ENCODE measurements at regions of chrX and their contacts with region 1.

Region 1: GRCh38 chrX:19372170-19372546 is 28.4 kb downstream of the PDHA1 start:
- DNase-seq: peak; percentile 79
- H3K4me3 ChIP-seq: peak overlapping the region; percentile 37 to 54
- H3K27ac ChIP-seq: no peak overlapping the region
- H3K4me1 ChIP-seq: peaks cover 0 to 4% of the 10 kb centered on the region in 2 experiments; a peak in 1 of 4 replicates
- H3K27me3 ChIP-seq: peaks cover 18% of the 10 kb centered on the region; the same call in 1 of the 2 replicates
- CTCF ChIP-seq: peak; percentile 91
- EP300 ChIP-seq: no peak
- RAD21 ChIP-seq: peak; percentile 82

Region 2: GRCh38 chrX:19360903-19361302 is 11.3 kb before region 1 on chrX:
- CTCF ChIA-PET with region 1: interaction called, 29 read pairs
- POLR2A ChIA-PET with region 1: no interaction called
- DNase-seq: no peak
- H3K4me3 ChIP-seq: no peak overlapping the region
- H3K27ac ChIP-seq: no peak overlapping the region
- H3K4me1 ChIP-seq: no peaks in the 10 kb centered on the region
- H3K27me3 ChIP-seq: no peaks in the 10 kb centered on the region; the same call in 1 of the 2 replicates
- CTCF ChIP-seq: no peak
- EP300 ChIP-seq: no peak
- RAD21 ChIP-seq: no peak

Region 3: DNA sequence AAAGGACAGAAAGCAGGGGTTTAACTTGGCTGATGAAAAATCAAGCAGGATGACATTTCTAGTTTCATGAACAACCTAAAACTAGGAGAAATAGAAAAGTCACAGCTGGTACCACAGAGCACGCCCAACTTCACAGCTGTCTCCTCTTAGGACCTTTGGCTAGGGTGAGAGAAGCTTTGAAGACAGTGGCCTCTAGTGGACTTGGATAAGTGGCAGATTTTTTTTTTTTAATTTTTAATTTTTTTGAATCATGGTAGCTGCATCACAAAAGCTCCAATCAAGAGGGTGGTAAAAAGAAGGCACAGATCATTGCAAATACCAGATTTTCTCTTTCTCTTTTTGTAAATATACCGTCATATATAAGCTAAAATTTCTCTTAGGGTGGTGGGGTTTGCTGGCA is 163.3 kb after region 1 on chrX:
- CTCF ChIA-PET with region 1: interaction called, 18 read pairs
- POLR2A ChIA-PET with region 1: no interaction called
- DNase-seq: peak; percentile 49
- H3K4me3 ChIP-seq: no peak overlapping the region
- H3K27ac ChIP-seq: no peak overlapping the region
- H3K4me1 ChIP-seq: no peaks in the 10 kb centered on the region; a peak in 1 of 4 replicates
- H3K27me3 ChIP-seq: no peaks in the 10 kb centered on the region
- CTCF ChIP-seq: peak; percentile 62
- EP300 ChIP-seq: no peak
- RAD21 ChIP-seq: peak; percentile 61

Measured in SK-N-SH (cell line).